Activated CD8-positive, alpha-beta T cell treated with anti-CD3 and anti-CD28 coated beads for 36 hours (primary cell): ENCODE measurements at regions of chr2 and their contacts with region 1.

Region 1: GRCh38 chr2:68742626-68743415 is 8.2 kb downstream of the ARHGAP25 start:
- DNase-seq: no peak
- ATAC-seq: no peak
- H3K4me3 Mint-ChIP-seq: peak overlapping the region; percentile 2
- H3K27ac Mint-ChIP-seq: peak overlapping the region; percentile 81
- H3K4me1 Mint-ChIP-seq: peaks cover 89% of the 10 kb centered on the region
- H3K27me3 Mint-ChIP-seq: no peaks in the 10 kb centered on the region
- CTCF ChIP-seq: no peak

Region 2: GRCh38 chr2:68715353-68716041 is 27.3 kb before region 1 on chr2:
- CTCF ChIA-PET with region 1: interaction called, 43 read pairs
- POLR2A ChIA-PET with region 1: interaction called, 111 read pairs
- intact Hi-C with region 1: no loop called
- DNase-seq: peak; percentile 66
- ATAC-seq: no peak
- H3K4me3 Mint-ChIP-seq: no peak overlapping the region
- H3K27ac Mint-ChIP-seq: peak overlapping the region; percentile 76
- H3K4me1 Mint-ChIP-seq: peaks cover 69% of the 10 kb centered on the region
- H3K27me3 Mint-ChIP-seq: peaks cover 2% of the 10 kb centered on the region
- CTCF ChIP-seq: peak; percentile 71

Region 3: GRCh38 chr2:68726608-68727367 is 16.0 kb before region 1 on chr2:
- CTCF ChIA-PET with region 1: interaction called, 43 read pairs
- POLR2A ChIA-PET with region 1: interaction called, 111 read pairs
- intact Hi-C with region 1: loop called (anchors 2 kb)
- DNase-seq: peak; percentile 96
- ATAC-seq: peak; percentile 94
- H3K4me3 Mint-ChIP-seq: peak overlapping the region; percentile 35
- H3K27ac Mint-ChIP-seq: peak overlapping the region; percentile 81
- H3K4me1 Mint-ChIP-seq: peaks cover 58% of the 10 kb centered on the region
- H3K27me3 Mint-ChIP-seq: no peaks in the 10 kb centered on the region
- CTCF ChIP-seq: no peak

Region 4: GRCh38 chr2:68766376-68766845 is 23.6 kb after region 1 on chr2:
- CTCF ChIA-PET with region 1: interaction called, 17 read pairs
- POLR2A ChIA-PET with region 1: interaction called, 26 read pairs
- intact Hi-C with region 1: loop called (anchors 5 kb)
- DNase-seq: peak; percentile 80
- ATAC-seq: peak; percentile 51
- H3K4me3 Mint-ChIP-seq: peak overlapping the region; percentile 68
- H3K27ac Mint-ChIP-seq: peak overlapping the region; percentile 99
- H3K4me1 Mint-ChIP-seq: peaks cover 94% of the 10 kb centered on the region
- H3K27me3 Mint-ChIP-seq: no peaks in the 10 kb centered on the region
- CTCF ChIP-seq: no peak

Region 5: DNA sequence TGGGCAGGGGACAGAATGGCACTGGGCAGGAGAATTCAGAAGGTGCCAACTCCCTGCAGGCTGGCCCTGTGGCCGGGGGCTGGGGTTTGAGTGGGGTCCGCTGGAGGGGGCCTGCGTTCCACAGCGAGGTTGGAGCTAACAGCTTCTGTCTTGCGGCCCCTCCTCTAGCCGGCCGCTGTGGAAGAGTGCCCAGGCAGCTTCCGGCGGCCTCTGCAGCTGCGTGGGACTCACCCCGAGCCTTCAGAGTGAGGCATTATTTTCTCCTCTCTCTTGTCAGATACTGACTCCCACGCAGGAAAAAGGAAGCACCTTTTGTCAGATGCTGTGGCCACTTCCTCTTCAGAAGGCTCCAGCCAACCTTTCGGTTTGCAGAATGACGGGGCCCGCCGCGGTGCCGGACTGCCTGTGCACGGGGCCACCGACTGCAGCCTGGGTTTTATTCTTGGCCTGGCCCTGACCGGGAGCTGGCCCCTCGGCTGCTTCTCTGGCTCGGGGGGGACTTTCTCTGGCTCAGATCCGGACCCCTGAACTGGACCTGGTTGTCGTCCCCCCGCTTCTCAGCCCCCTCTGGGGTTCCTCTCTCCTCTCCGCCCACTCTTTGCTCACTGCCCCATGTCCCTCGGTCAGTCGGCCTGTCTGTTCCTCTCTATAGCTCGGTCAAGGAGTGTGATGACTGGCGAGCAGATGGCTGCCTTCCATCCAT is 31.9 kb after region 1 on chr2:
- CTCF ChIA-PET with region 1: interaction called, 17 read pairs
- POLR2A ChIA-PET with region 1: interaction called, 26 read pairs
- intact Hi-C with region 1: loop called (anchors 5 kb)
- DNase-seq: peak; percentile 89
- ATAC-seq: peak; percentile 73
- H3K4me3 Mint-ChIP-seq: peak overlapping the region; percentile 75
- H3K27ac Mint-ChIP-seq: peak overlapping the region; percentile 99
- H3K4me1 Mint-ChIP-seq: peaks cover 87% of the 10 kb centered on the region
- H3K27me3 Mint-ChIP-seq: no peaks in the 10 kb centered on the region
- CTCF ChIP-seq: no peak

Region 6: GRCh38 chr2:69163109-69163508 is 420.3 kb after region 1 on chr2:
- CTCF ChIA-PET with region 1: no interaction called
- POLR2A ChIA-PET with region 1: no interaction called
- intact Hi-C with region 1: no loop called
- DNase-seq: no peak
- ATAC-seq: no peak
- H3K4me3 Mint-ChIP-seq: no peak overlapping the region
- H3K27ac Mint-ChIP-seq: no peak overlapping the region
- H3K4me1 Mint-ChIP-seq: no peaks in the 10 kb centered on the region
- H3K27me3 Mint-ChIP-seq: peaks cover 5% of the 10 kb centered on the region
- CTCF ChIP-seq: no peak